ENCODE measurements at regions of chr6 and their contacts with region 1.

Region 1: DNA sequence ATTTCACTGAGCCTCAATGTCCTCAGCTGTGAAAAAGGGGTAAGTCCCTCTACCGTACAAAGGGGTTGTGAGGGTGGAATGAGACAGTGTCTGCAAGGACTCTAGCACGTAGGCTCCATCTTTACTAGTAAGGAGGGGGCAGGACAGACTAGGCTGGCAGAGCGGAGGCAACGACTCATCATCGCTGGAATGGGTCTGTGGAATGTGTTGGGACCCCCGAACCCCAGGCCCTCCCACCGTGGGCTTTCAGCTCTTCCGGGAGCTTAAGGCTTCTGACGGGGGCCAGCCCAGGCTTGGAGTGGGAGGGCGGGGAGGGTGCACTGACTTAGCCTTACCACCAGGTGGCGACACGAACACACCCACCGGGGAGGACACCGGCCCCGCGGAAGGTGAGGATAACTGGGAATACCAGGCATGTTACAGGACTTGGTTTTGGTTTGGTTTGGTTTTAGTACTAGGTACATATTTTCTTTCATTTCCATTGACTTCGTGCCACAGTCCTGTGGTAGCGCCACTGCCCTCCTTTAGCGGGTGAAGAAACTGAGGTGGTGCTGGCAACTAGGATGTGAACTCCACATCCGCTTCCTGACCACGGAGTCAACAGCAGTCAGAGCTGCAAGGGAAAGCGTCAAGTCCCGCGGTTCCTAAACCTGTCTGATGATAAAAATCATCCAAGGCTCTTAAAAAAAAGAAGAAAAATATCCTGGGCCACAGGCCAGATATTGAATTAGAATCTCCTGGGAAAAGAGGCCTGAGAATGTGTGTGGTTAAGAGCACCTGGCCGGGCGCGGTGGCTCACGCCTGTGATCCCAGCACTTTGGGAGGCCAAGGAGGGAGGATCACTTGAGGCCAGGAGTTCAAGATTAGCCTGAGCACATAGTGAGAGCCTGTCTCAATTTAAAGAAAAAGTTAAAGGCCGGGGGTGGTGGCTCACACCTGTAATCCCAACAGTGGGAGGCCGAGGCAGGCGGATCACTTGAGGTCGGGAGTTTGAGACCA is 10.3 kb upstream of the TULP1 start:
- DNase-seq: peak; percentile 74 to 89 (median 87)
- ATAC-seq: peak; percentile 87 to 92
- H3K4me3 ChIP-seq: no peak overlapping the region
- H3K27ac ChIP-seq: no peak overlapping the region
- H3K4me1 ChIP-seq: no peaks in the 10 kb centered on the region
- H3K27me3 ChIP-seq: no peaks in the 10 kb centered on the region

Region 2: GRCh38 chr6:35224720-35225119 is 298.2 kb before region 1 on chr6:
- intact Hi-C with region 1: no loop called
- DNase-seq: no peak
- ATAC-seq: no peak
- H3K4me3 ChIP-seq: no peak overlapping the region
- H3K27ac ChIP-seq: no peak overlapping the region
- H3K4me1 ChIP-seq: no peaks in the 10 kb centered on the region
- H3K27me3 ChIP-seq: no peaks in the 10 kb centered on the region

Region 3: DNA sequence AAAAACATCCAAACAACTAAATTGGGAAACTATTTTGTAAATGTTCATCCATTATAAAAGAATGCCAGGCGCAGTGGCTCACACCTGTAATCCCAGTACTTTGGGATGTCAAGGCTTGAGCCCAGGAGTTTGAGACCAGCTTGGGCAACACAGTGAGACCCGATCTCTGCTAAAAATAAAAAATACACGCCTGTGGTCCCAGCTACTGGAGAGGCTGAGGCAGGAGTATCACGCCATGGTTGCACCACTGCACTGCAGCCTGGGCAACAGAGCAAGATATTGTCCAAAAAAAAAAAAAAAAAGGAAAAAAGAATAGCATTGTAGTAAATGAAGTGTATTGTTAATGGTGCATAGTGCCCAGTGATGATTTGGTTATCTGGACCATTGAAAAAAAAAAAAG is 127.1 kb after region 1 on chr6:
- intact Hi-C with region 1: no loop called
- DNase-seq: no peak
- ATAC-seq: no peak
- H3K4me3 ChIP-seq: no peak overlapping the region
- H3K27ac ChIP-seq: no peak overlapping the region
- H3K4me1 ChIP-seq: peaks cover 4% of the 10 kb centered on the region
- H3K27me3 ChIP-seq: no peaks in the 10 kb centered on the region

Region 4: GRCh38 chr6:35731736-35732532 is 209.0 kb after region 1 on chr6:
- intact Hi-C with region 1: loop called (anchors 1 to 5 kb)
- DNase-seq: peak; percentile 98 to 99 (median 98)
- ATAC-seq: peak; percentile 79 to 81
- H3K4me3 ChIP-seq: peak overlapping the region; percentile 67
- H3K27ac ChIP-seq: peak overlapping the region; percentile 100
- H3K4me1 ChIP-seq: peaks cover 27% of the 10 kb centered on the region
- H3K27me3 ChIP-seq: no peaks in the 10 kb centered on the region

Region 5: DNA sequence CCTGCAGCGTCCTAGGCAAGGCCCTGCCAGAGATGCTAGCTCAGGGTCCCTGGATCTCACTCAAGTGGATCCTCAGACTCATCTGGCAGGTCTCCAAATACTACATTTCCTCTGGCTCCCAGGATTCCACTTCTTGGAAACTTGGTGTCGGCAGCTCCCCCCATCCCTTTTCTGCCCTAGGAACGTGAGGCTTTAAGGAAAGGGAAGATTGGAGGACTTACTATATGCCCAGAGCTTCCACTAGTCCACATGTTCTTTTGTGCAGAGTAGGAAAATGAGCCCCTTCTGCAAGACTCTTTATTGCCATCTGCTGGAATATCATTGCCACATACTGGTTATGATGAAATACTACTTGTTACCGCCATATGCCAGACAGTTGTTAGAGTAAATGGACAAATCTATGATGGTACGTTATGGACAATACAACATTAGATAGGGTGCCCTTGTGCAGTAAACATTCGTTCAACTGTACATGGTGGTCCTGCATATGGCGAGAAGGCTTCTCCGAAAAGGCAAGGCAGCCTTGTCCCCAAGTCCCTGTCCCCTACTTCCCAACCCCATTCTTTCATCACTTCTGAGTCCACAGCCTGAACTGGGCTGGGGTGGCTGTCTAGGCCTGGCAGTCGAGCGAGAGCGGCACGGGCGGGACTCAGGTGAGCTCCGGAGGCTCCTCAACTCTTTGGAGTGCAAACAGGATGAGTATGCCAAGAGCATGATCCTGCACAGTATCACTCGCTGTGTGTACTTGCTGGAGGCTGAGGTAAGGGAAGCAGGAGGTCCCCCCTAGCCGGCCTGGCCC is 214.7 kb after region 1 on chr6:
- intact Hi-C with region 1: loop called (anchors 1 to 5 kb)
- DNase-seq: peak in 2 of 3 donors; percentile 1 to 54
- ATAC-seq: peak; percentile 78 to 81
- H3K4me3 ChIP-seq: no peak overlapping the region
- H3K27ac ChIP-seq: no peak overlapping the region
- H3K4me1 ChIP-seq: peaks cover 8% of the 10 kb centered on the region
- H3K27me3 ChIP-seq: no peaks in the 10 kb centered on the region

Region 6: GRCh38 chr6:35757456-35758123 is 234.6 kb after region 1 on chr6:
- intact Hi-C with region 1: loop called in 1 of 4 experiments (anchors 5 kb)
- DNase-seq: no peak
- ATAC-seq: no peak
- H3K4me3 ChIP-seq: no peak overlapping the region
- H3K27ac ChIP-seq: no peak overlapping the region
- H3K4me1 ChIP-seq: no peaks in the 10 kb centered on the region
- H3K27me3 ChIP-seq: no peaks in the 10 kb centered on the region

Region 7: GRCh38 chr6:35810971-35811497 is 288.1 kb after region 1 on chr6:
- intact Hi-C with region 1: no loop called
- DNase-seq: no peak
- ATAC-seq: peak in 1 of 2 donors; percentile 11
- H3K4me3 ChIP-seq: no peak overlapping the region
- H3K27ac ChIP-seq: no peak overlapping the region
- H3K4me1 ChIP-seq: no peaks in the 10 kb centered on the region
- H3K27me3 ChIP-seq: no peaks in the 10 kb centered on the region

Measured in right cardiac atrium (tissue), 5 donors.